Lower lobe of right lung (tissue), 2 donors: ENCODE measurements at regions of chr3 and their contacts with region 1.

Region 1: GRCh38 chr3:17423786-17424536 is 318.5 kb downstream of the TBC1D5 start:
- DNase-seq: no peak
- ATAC-seq: no peak
- H3K4me3 ChIP-seq: no peak overlapping the region
- H3K27ac ChIP-seq: no peak overlapping the region
- H3K4me1 ChIP-seq: no peaks in the 10 kb centered on the region
- H3K27me3 ChIP-seq: no peaks in the 10 kb centered on the region
- CTCF ChIP-seq: no peak

Region 2: DNA sequence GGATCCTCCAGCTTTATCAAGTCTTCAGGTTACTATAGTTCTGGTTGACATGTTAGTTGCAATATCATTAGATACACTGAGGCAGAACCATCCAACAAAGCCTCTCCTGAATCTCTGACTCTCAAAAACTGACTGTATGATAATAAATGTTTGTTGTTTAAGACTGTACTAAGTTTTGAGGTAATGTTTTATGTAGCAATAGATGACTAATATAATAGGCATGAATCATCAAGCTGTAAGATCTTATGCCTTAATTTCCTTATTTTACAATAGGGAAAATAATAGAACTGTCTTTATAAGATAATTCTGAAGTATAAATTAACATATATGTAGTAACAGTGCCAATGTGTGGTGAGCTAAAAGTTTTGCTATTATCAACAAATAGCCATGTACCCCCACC is 407.4 kb after region 1 on chr3:
- intact Hi-C with region 1: loop called (anchors 10 kb)
- DNase-seq: no peak
- ATAC-seq: no peak
- H3K4me3 ChIP-seq: no peak overlapping the region
- H3K27ac ChIP-seq: no peak overlapping the region
- H3K4me1 ChIP-seq: no peaks in the 10 kb centered on the region
- H3K27me3 ChIP-seq: no peaks in the 10 kb centered on the region
- CTCF ChIP-seq: no peak